H1 (cell line): ENCODE measurements at regions of chr7 and their contacts with region 1.

Region 1: GRCh38 chr7:32942786-32943653 is 14.2 kb upstream of the FKBP9 start:
- DNase-seq: peak in 1 of 2 experiments; percentile 86
- H3K4me3 ChIP-seq: peak overlapping the region; percentile 14 to 58 (median 26); a peak in 7 of 8 replicates
- H3K27ac ChIP-seq: no peak overlapping the region
- H3K4me1 ChIP-seq: peaks cover 0 to 8% (median 2%) of the 10 kb centered on the region in 4 experiments; a peak in 6 of 7 replicates
- H3K27me3 ChIP-seq: peaks cover 45 to 85% (median 76%) of the 10 kb centered on the region in 4 experiments
- CTCF ChIP-seq: peak; percentile 43 to 87 (median 53)
- EP300 ChIP-seq: no peak
- POLR2A ChIP-seq: no peak
- RAD21 ChIP-seq: peak; percentile 55 to 85

Region 2: DNA sequence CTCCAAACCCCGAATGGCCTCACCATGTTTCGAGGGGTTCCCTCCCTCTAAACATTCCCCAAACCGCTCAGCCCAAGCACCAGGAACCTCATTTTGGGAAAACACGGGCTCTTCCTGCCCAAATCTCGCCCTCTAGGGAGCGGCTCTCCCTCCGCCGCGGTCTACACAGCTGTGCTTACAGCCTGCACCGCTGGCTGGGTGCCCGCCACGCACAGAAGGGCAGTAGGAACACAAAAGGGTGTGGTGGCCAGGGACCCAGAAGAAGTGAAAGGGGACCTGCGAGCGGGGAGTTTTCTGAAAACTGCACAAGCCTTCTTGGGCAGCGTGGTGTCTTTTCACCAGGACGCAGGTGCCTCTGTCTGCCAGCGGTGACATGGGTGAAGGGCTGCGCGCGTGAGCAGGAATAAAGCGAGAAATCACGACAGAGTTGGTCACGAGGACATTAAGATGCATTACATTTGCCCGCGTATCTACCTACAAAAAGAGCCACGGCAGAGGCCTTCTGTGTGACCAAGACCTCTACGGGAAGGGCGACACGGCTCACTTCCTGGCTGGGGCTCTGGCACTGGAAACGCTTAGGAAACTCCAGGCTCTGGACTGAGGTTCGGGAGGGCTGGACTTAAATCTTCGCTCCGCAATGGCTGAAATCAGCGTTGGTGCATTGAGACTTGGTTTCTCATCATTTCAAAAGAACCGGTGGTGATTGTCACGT is 624.6 kb before region 1 on chr7:
- CTCF ChIA-PET with region 1: no interaction called
- POLR2A ChIA-PET with region 1: no interaction called
- DNase-seq: peak in 1 of 2 experiments; percentile 45
- H3K4me3 ChIP-seq: no peak overlapping the region
- H3K27ac ChIP-seq: no peak overlapping the region
- H3K4me1 ChIP-seq: no peaks in the 10 kb centered on the region; a peak in 1 of 7 replicates
- H3K27me3 ChIP-seq: no peaks in the 10 kb centered on the region; a peak in 1 of 7 replicates
- CTCF ChIP-seq: no peak
- EP300 ChIP-seq: no peak
- POLR2A ChIP-seq: no peak
- RAD21 ChIP-seq: no peak

Region 3: DNA sequence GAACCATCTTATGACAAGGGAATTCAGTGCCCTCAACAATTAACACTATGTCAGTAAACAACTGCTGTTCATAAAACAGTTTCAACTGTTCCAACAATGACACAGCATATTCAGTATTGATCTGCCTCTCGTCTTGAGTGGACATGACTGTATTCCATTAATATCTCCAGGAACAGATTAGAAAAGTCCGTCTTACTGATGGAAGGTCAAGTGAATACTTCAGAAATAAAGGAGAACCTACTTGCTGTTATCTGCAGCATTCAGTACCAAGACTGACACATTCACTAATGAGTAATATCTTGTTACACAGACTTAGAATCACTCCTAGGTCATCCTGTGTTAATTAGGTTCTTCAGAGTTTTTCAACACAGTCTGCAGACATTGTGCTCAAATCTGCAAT is 63.6 kb before region 1 on chr7:
- CTCF ChIA-PET with region 1: no interaction called
- POLR2A ChIA-PET with region 1: no interaction called
- DNase-seq: no peak
- H3K4me3 ChIP-seq: no peak overlapping the region
- H3K27ac ChIP-seq: no peak overlapping the region
- H3K4me1 ChIP-seq: no peaks in the 10 kb centered on the region
- H3K27me3 ChIP-seq: no peaks in the 10 kb centered on the region
- CTCF ChIP-seq: no peak
- EP300 ChIP-seq: no peak
- POLR2A ChIP-seq: no peak
- RAD21 ChIP-seq: no peak

Region 4: GRCh38 chr7:32957326-32958045 is 14.5 kb after region 1 on chr7 and contains the start of gene FKBP9:
- CTCF ChIA-PET with region 1: interaction called, 15 read pairs
- POLR2A ChIA-PET with region 1: interaction called, 19 read pairs
- DNase-seq: peak in 1 of 2 experiments; percentile 89
- H3K4me3 ChIP-seq: peak within 1 kb of the TSS; percentile 50 to 83 (median 60)
- H3K27ac ChIP-seq: no peak within 1 kb of the TSS
- H3K4me1 ChIP-seq: peaks cover 0 to 8% (median 3%) of the 10 kb centered on the region in 4 experiments; a peak in 4 of 7 replicates
- H3K27me3 ChIP-seq: peaks cover 0 to 22% (median 13%) of the 10 kb centered on the region in 4 experiments; a peak in 5 of 7 replicates
- CTCF ChIP-seq: no peak
- EP300 ChIP-seq: no peak
- POLR2A ChIP-seq: peak in 1 of 2 experiments; percentile 29; a peak in 1 of 3 replicates
- RAD21 ChIP-seq: no peak
- total RNA-seq, gene FKBP9: 9.9 and 10.1 TPM in 2 replicates

Region 5: GRCh38 chr7:33109005-33109757 is 166.2 kb after region 1 on chr7 and contains the start of gene RP9:
- CTCF ChIA-PET with region 1: interaction called, 11 read pairs
- POLR2A ChIA-PET with region 1: interaction called, 6 read pairs
- DNase-seq: peak in 1 of 2 experiments; percentile 89
- H3K4me3 ChIP-seq: peak within 1 kb of the TSS; percentile 68 to 98 (median 75)
- H3K27ac ChIP-seq: no peak within 1 kb of the TSS; the same call in 1 of the 2 replicates
- H3K4me1 ChIP-seq: peaks cover 0 to 5% (median 1%) of the 10 kb centered on the region in 4 experiments; a peak in 2 of 7 replicates
- H3K27me3 ChIP-seq: peaks cover 0 to 3% (median 0%) of the 10 kb centered on the region in 4 experiments; a peak in 1 of 7 replicates
- CTCF ChIP-seq: peak; percentile 32 to 78 (median 55)
- EP300 ChIP-seq: 0 out of 3 replicates have a peak, but pooled peaks of 1 of the 2 experiments have one; percentile 35
- POLR2A ChIP-seq: no peak
- RAD21 ChIP-seq: peak; percentile 49 to 72; a peak in 3 of 4 replicates
- total RNA-seq, gene RP9: 11.9 and 12.4 TPM in 2 replicates